Heart left ventricle (tissue), 16 donors: ENCODE measurements at regions of chr1 and their contacts with region 1.

Region 1: GRCh38 chr1:230778916-230779590 is 31.9 kb downstream of the CAPN9 start:
- DNase-seq: no peak
- ATAC-seq: no peak
- H3K4me3 ChIP-seq: no peak overlapping the region
- H3K27ac ChIP-seq: no peak overlapping the region
- H3K4me1 ChIP-seq: no peaks in the 10 kb centered on the region
- H3K27me3 ChIP-seq: no peaks in the 10 kb centered on the region
- CTCF ChIP-seq: no peak
- POLR2A ChIP-seq: no peak

Region 2: DNA sequence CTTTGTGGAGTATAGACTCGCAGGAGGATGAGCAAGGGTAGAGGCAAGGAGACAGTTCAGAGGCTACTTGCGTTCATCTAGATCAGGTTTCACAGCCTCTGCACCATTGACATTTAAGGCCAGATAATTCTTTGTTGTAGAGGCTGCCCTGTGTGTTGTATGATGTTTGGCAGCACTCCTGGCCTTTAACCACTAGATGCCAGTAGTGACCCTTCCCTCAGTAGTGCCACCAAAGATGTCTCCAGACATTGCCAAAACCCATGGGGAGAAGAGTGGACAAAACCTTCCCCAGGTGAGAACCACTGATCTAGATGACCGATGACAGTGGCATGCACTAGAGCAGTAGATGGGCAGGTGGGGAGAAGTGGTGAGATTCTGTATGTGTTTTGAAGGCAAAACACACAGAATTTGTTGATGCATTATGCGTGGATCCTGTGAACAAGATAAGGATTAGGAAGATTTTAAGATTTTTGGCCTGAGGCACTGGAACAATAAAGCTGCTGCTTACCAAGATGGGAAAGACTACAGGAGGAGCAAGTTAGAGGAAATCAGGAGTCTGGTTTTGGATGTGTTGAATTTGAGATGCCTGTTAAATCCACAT is 146.7 kb before region 1 on chr1:
- intact Hi-C with region 1: loop called in 3 of 10 experiments (anchors 5 to 10 kb)
- DNase-seq: no peak
- ATAC-seq: peak in 3 of 4 donors; percentile 59 to 64 (median 63)
- H3K4me3 ChIP-seq: no peak overlapping the region
- H3K27ac ChIP-seq: no peak overlapping the region
- H3K4me1 ChIP-seq: no peaks in the 10 kb centered on the region
- H3K27me3 ChIP-seq: no peaks in the 10 kb centered on the region
- CTCF ChIP-seq: peak in 11 of 12 donors; percentile 20 to 56 (median 37)
- POLR2A ChIP-seq: no peak

Region 3: GRCh38 chr1:230702934-230703678 is 75.9 kb before region 1 on chr1:
- intact Hi-C with region 1: no loop called
- DNase-seq: no peak
- ATAC-seq: no peak
- H3K4me3 ChIP-seq: no peak overlapping the region
- H3K27ac ChIP-seq: no peak overlapping the region
- H3K4me1 ChIP-seq: peaks cover 0 to 5% (median 0%) of the 10 kb centered on the region in 12 donors
- H3K27me3 ChIP-seq: no peaks in the 10 kb centered on the region
- CTCF ChIP-seq: no peak
- POLR2A ChIP-seq: no peak